ENCODE measurements at regions of chr1 and their contacts with region 1.

Region 1: DNA sequence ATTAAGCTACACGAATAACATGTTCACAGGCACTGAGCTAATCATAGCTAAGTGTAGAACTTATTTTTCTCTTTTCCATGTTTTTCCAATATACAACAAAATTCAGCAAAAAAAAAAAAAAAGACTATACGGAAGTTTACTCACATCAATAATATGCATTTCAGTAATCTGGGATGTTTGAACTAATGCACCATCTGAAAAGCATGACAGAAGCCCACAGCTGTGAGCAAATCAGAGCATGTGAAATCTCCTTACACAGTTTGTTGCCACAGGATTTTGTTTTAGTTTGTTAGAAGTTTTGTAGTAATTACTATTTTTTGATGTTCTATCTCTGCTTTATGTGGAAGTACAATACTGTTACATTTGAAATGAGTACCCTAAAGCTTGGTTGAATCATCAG is 1051.7 kb downstream of the TTLL7 start:
- DNase-seq: no peak
- ATAC-seq: no peak
- H3K4me3 ChIP-seq: no peak overlapping the region
- H3K27ac ChIP-seq: no peak overlapping the region
- H3K4me1 ChIP-seq: no peaks in the 10 kb centered on the region
- H3K27me3 ChIP-seq: no peaks in the 10 kb centered on the region
- CTCF ChIP-seq: no peak

Region 2: DNA sequence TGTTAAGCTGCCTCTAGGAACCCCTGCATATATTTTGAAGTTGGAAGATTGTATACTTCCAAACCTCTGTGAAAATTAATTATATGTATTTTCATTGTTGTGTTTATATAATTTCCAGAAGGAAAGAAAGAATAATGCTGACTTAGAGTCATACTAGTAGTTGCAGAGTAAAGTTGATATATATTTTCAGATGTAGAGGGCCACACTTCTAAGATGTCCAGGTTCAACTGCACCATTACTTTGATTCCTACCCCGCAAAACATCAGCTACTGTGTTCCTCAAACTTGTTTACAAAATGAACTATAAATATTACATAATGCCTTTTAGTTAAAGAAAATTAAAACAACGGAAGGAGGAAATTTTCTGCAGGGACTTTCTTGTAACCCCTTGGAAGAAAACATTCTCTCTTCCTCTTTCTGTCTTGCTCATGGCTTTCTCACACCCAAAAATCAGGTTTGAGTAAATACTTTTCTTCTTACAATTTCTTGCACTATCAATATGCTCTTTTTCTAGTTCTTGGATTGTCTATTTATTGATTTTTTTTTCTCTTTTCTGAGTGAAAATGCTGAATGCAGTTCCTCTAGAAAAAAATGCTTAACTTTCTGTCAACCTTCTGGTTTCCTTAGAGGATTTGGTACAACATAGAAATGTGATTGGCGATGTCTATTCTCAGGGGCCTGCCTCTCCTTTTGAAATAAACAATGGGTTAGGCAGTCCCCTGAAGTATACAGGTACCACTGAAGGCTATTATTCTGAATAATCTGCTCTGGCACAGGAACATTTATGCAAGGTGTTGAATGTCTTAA is 183.8 kb after region 1 on chr1:
- CTCF ChIA-PET with region 1: no interaction called
- POLR2A ChIA-PET with region 1: no interaction called
- in situ Hi-C with region 1: no loop called
- intact Hi-C with region 1: no loop called
- DNase-seq: no peak
- ATAC-seq: no peak
- H3K4me3 ChIP-seq: no peak overlapping the region
- H3K27ac ChIP-seq: no peak overlapping the region
- H3K4me1 ChIP-seq: no peaks in the 10 kb centered on the region
- H3K27me3 ChIP-seq: no peaks in the 10 kb centered on the region
- CTCF ChIP-seq: no peak

Region 3: GRCh38 chr1:83531521-83532309 is 584.4 kb after region 1 on chr1:
- CTCF ChIA-PET with region 1: no interaction called
- POLR2A ChIA-PET with region 1: interaction called, 15 read pairs
- in situ Hi-C with region 1: no loop called
- intact Hi-C with region 1: no loop called
- DNase-seq: no peak
- ATAC-seq: no peak
- H3K4me3 ChIP-seq: no peak overlapping the region
- H3K27ac ChIP-seq: no peak overlapping the region
- H3K4me1 ChIP-seq: no peaks in the 10 kb centered on the region
- H3K27me3 ChIP-seq: no peaks in the 10 kb centered on the region
- CTCF ChIP-seq: no peak